ENCODE measurements at regions of chr12 and their contacts with region 1.

Region 1: DNA sequence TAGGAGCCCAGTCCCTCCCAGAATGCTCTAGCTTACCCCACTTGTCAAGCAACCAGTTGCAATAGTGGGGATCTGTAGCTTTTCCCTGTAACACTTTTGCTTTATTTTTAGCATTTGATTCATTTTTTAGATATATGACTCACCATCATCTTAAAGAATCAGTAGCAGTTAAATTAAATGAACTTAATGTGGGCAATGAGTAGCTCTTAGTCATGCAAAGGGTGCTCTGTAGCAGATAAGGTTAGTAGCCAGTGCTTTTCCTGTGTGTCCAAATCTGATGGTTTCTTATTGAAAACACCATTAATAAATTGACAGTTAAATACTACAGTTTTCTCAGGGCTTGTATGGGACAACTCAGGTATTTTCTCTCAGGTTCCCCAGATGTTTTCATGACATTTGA is 311.8 kb downstream of the RERGL start:
- DNase-seq: no peak
- H3K4me3 ChIP-seq: no peak overlapping the region
- H3K27ac ChIP-seq: no peak overlapping the region
- H3K4me1 ChIP-seq: no peaks in the 10 kb centered on the region
- H3K27me3 ChIP-seq: no peaks in the 10 kb centered on the region
- CTCF ChIP-seq: no peak
- EP300 ChIP-seq: no peak
- POLR2A ChIP-seq: no peak

Region 2: GRCh38 chr12:17680220-17680619 is 98.0 kb before region 1 on chr12:
- intact Hi-C with region 1: no loop called
- DNase-seq: no peak
- H3K4me3 ChIP-seq: no peak overlapping the region
- H3K27ac ChIP-seq: no peak overlapping the region
- H3K4me1 ChIP-seq: no peaks in the 10 kb centered on the region
- H3K27me3 ChIP-seq: no peaks in the 10 kb centered on the region
- CTCF ChIP-seq: no peak
- EP300 ChIP-seq: no peak
- POLR2A ChIP-seq: no peak

Region 3: GRCh38 chr12:17866802-17867201 is 88.6 kb after region 1 on chr12:
- intact Hi-C with region 1: loop called in 3 of 4 experiments (anchors 5 kb)
- DNase-seq: no peak
- H3K4me3 ChIP-seq: no peak overlapping the region
- H3K27ac ChIP-seq: no peak overlapping the region
- H3K4me1 ChIP-seq: no peaks in the 10 kb centered on the region
- H3K27me3 ChIP-seq: no peaks in the 10 kb centered on the region
- CTCF ChIP-seq: no peak
- EP300 ChIP-seq: no peak
- POLR2A ChIP-seq: no peak

Region 4: GRCh38 chr12:17875230-17875629 is 97.0 kb after region 1 on chr12:
- intact Hi-C with region 1: loop called in 1 of 4 experiments (anchors 5 kb)
- DNase-seq: no peak
- H3K4me3 ChIP-seq: no peak overlapping the region
- H3K27ac ChIP-seq: no peak overlapping the region
- H3K4me1 ChIP-seq: no peaks in the 10 kb centered on the region
- H3K27me3 ChIP-seq: no peaks in the 10 kb centered on the region
- CTCF ChIP-seq: no peak
- EP300 ChIP-seq: no peak
- POLR2A ChIP-seq: no peak

Region 5: DNA sequence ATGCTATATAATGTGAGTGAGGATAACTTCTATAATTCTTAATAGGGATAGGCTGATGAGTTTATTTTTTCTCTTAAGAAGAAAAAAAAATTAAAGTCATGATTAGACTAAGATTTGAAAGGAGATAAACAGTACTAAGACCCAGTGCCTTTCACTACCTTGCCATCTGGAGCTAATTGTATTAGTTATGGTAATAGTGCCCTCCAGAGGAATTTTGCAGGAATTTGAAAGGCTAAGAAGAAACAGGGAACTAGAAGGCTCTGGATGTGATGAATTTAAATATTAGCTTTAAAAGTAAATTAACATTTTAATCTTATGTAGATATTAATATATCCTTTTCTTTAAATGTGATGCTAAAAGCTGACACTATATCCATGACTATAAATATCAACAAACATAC is 446.5 kb after region 1 on chr12:
- intact Hi-C with region 1: no loop called
- DNase-seq: no peak
- H3K4me3 ChIP-seq: no peak overlapping the region
- H3K27ac ChIP-seq: no peak overlapping the region
- H3K4me1 ChIP-seq: no peaks in the 10 kb centered on the region
- H3K27me3 ChIP-seq: no peaks in the 10 kb centered on the region
- CTCF ChIP-seq: no peak
- EP300 ChIP-seq: no peak
- POLR2A ChIP-seq: no peak

Measured in ovary (tissue), 10 donors.